ENCODE measurements at regions of chr5 and their contacts with region 1.

Region 1: GRCh38 chr5:43680286-43680685 is 77.3 kb downstream of the NNT start:
- DNase-seq: no peak
- H3K4me3 ChIP-seq: no peak overlapping the region
- H3K27ac ChIP-seq: no peak overlapping the region
- H3K4me1 ChIP-seq: no peaks in the 10 kb centered on the region
- CTCF ChIP-seq: no peak

Region 2: DNA sequence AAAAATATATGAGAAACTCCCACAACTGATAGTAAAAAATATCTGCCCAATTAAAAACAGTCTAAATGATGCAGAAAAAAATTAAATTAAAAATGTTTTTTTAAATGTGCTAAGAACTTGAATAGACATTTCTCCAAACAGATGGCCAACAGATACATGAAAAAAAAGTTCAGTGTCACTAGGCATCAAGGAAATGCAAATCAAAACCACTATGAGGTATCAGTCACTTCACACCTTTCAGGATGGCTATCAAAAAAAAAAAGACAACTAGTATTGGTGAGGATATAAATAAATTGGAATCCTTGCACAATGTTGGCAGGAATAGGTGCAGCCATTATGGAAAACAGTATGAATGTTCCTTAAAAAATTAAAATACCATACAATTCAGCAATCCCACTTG is 543.0 kb before region 1 on chr5:
- CTCF ChIA-PET with region 1: no interaction called
- POLR2A ChIA-PET with region 1: no interaction called
- intact Hi-C with region 1: no loop called
- DNase-seq: no peak
- H3K4me3 ChIP-seq: no peak overlapping the region
- H3K27ac ChIP-seq: no peak overlapping the region
- H3K4me1 ChIP-seq: peaks cover 5% of the 10 kb centered on the region
- CTCF ChIP-seq: no peak

Region 3: DNA sequence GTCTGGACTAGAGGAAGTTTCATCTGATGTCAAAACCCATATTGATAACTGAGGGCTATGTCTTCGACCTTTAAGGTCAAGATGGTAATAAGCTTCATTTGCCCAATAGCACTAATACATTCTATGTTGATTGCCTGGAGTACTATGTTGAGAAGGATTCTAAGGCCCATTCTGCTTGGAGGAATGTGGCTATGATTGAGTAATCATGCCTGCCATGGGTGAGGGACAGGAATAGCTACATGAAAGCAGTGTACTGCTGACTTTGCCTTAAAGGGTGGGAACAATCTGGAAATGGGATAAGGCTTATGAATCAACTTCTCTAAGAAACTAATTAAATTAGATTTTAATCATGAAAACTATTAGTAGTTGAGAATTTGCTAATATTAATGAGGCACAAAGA is 63.8 kb before region 1 on chr5:
- CTCF ChIA-PET with region 1: no interaction called
- POLR2A ChIA-PET with region 1: no interaction called
- intact Hi-C with region 1: no loop called
- DNase-seq: no peak
- H3K4me3 ChIP-seq: no peak overlapping the region
- H3K27ac ChIP-seq: no peak overlapping the region
- H3K4me1 ChIP-seq: no peaks in the 10 kb centered on the region
- CTCF ChIP-seq: no peak

Region 4: DNA sequence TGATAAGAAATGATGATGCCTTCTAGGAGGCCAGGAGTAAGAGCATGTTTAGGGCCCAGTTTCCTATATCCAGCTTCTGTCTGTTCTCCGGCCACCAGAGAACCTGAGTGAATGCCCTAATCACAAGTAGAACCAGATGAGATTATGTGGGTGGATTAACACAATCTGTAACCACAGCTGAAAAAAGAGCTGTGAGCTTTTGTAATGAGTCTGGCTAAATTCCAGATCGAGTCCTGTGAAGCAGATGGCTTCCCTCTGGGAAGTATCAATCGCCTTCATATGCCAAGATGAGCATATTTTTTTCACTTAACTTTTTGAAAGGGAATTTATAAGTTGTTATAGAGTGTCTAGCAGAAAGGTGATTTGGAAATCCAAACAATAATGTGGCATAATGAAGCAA is 22.5 kb after region 1 on chr5:
- CTCF ChIA-PET with region 1: no interaction called
- POLR2A ChIA-PET with region 1: interaction called, 3 read pairs
- intact Hi-C with region 1: loop called (anchors 1 kb)
- DNase-seq: no peak
- H3K4me3 ChIP-seq: no peak overlapping the region
- H3K27ac ChIP-seq: no peak overlapping the region
- H3K4me1 ChIP-seq: no peaks in the 10 kb centered on the region
- CTCF ChIP-seq: no peak

Measured in OCI-LY7 (cell line).